Panc1 (cell line): ENCODE measurements at regions of chr1 and their contacts with region 1.

Region 1: DNA sequence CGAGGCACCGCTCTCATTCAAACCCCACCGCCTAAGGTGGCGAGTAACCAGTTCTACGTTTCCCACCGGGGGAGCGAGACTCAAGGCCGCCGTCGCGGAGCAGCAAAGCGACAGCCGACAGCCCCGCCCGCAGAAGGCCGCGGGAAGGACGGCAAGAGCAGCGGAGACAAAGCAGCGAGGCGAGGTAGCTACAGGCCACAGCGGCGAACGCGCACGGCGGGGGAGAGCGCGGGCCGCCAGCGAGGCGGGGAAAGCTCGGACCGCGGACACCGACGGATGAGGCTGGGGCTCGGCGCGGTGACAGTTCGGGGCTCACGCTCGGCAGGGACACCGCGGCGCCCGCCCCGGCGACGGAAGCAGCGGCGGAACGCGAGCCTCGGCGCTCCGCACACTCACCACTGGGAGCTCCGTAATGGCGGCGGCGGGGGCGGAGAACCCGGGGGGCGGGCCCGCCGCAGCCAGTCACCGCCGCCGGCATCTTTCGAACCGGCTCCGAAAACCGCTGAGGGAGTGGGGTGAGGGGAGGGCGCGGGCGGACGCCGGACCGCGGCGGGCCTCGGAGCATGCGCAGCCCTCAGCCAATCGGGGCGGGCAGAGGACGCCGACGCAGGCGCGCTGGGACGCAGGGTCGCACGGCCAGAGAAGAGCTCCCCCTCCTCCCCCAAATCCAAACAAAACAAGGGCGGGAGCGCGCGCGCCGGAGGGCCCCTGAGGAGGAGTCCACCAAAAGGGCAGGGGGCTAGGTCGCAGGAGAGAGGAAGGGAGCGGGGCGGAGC is 666 bp downstream of the HP1BP3 start:
- DNase-seq: peak; percentile 80
- ATAC-seq: peak; percentile 88
- H3K4me3 ChIP-seq: peak overlapping the region; percentile 73 to 84
- H3K27ac ChIP-seq: peak overlapping the region; percentile 92
- H3K4me1 ChIP-seq: peaks cover 25% of the 10 kb centered on the region
- H3K27me3 ChIP-seq: no peaks in the 10 kb centered on the region
- CTCF ChIP-seq: no peak

Region 2: GRCh38 chr1:20867847-20868246 is 81.4 kb after region 1 on chr1:
- CTCF ChIA-PET with region 1: no interaction called
- POLR2A ChIA-PET with region 1: interaction called, 12 read pairs
- in situ Hi-C with region 1: no loop called
- intact Hi-C with region 1: no loop called
- DNase-seq: no peak
- ATAC-seq: no peak
- H3K4me3 ChIP-seq: no peak overlapping the region
- H3K27ac ChIP-seq: no peak overlapping the region
- H3K4me1 ChIP-seq: no peaks in the 10 kb centered on the region
- H3K27me3 ChIP-seq: no peaks in the 10 kb centered on the region
- CTCF ChIP-seq: no peak

Region 3: DNA sequence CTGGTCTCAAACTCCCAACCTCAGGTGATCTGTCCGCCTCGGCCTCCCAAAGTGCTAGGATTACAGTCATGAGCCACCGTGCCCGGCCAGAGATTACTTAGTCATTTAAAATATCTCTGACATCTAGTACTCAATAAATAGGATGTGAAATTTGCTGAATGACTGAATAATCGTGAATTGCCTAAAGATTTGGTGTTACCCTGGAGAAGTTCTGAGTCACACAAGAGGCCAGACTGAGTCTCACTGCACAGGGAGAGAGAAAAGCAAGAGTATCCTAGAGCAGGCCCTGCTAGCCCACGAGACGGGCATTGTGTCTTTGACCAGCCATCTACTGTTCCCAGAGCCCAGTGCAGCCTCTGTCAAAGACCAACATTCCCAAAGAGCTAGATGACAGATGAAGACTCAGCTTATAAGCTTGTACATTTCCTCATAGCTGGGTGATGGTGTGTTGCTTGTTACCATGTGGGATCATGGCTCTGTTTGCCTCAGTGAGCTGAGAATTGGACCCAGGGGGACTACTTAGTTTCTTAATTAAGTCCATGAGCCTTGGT is 395.8 kb after region 1 on chr1:
- CTCF ChIA-PET with region 1: no interaction called
- POLR2A ChIA-PET with region 1: interaction called, 16 read pairs
- in situ Hi-C with region 1: no loop called
- intact Hi-C with region 1: no loop called
- DNase-seq: no peak
- ATAC-seq: peak; percentile 46; the same call in 1 of the 2 replicates
- H3K4me3 ChIP-seq: no peak overlapping the region
- H3K27ac ChIP-seq: no peak overlapping the region
- H3K4me1 ChIP-seq: no peaks in the 10 kb centered on the region
- H3K27me3 ChIP-seq: no peaks in the 10 kb centered on the region
- CTCF ChIP-seq: no peak

Region 4: DNA sequence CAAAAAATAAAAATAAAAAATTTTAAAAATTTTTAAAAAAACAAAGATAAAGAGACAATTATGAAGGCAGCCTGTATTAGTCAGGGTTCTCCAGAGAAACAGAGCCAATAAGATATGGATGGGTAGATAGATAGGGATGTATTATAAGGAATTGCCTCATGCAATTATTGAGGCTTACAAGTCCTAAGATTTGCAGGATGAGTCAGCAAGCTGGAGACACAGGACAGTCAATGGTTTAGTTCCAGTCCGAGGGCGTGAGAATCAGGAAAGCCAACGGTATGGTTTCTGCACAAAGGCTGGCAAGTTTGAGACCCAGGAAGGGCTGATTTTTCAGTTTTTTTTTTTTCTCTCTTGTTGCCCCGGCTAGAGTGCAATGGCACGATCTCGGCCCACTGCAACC is 414.3 kb after region 1 on chr1:
- CTCF ChIA-PET with region 1: interaction called, 18 read pairs
- POLR2A ChIA-PET with region 1: no interaction called
- in situ Hi-C with region 1: no loop called
- intact Hi-C with region 1: no loop called
- DNase-seq: no peak
- ATAC-seq: no peak
- H3K4me3 ChIP-seq: no peak overlapping the region
- H3K27ac ChIP-seq: no peak overlapping the region
- H3K4me1 ChIP-seq: no peaks in the 10 kb centered on the region; the same call in 1 of the 2 replicates
- H3K27me3 ChIP-seq: no peaks in the 10 kb centered on the region
- CTCF ChIP-seq: no peak

Region 5: GRCh38 chr1:21937372-21938221 is 1151.2 kb after region 1 on chr1:
- CTCF ChIA-PET with region 1: no interaction called
- POLR2A ChIA-PET with region 1: interaction called, 17 read pairs
- in situ Hi-C with region 1: no loop called
- intact Hi-C with region 1: no loop called
- DNase-seq: no peak
- ATAC-seq: peak; percentile 71
- H3K4me3 ChIP-seq: peak overlapping the region; percentile 33 to 51
- H3K27ac ChIP-seq: peak overlapping the region; percentile 93
- H3K4me1 ChIP-seq: peaks cover 64% of the 10 kb centered on the region
- H3K27me3 ChIP-seq: no peaks in the 10 kb centered on the region
- CTCF ChIP-seq: no peak